Right ventricle myocardium inferior (tissue), 1 donor: ENCODE measurements at regions of chr12 and their contacts with region 1.

Region 1: GRCh38 chr12:19035536-19035935 is 94.0 kb upstream of the PLEKHA5 start:
- DNase-seq: no peak
- ATAC-seq: peak; percentile 74

Region 2: DNA sequence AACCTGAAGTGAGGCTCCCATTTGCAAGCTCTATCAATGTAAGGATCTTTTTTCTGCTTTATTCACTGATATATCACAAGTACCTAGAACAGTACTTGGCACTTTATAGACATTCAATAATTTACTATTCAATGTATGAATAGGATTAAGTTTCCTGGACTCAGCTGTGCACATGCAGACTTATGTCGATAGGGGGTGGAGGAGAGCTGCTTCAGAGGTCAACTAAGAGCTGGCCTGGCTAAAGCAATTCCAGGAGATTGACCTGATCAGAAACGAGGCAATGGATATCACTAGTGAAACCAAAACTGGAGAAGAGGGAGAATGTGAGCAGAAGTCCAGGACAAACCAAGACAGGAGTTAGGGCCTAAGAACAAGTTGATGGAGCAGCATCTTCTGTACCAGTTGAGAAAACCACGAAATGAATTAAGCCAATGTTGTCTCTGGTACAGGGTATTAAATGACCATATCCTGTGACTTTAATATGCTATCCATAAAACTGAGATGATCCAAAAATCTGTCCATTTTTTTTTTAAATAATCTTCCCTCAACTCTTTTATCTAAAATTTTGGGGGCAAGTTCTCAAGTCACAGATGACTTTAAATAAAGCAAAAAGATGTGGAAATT is 605.0 kb before region 1 on chr12:
- intact Hi-C with region 1: loop called (anchors 5 kb)
- DNase-seq: no peak
- ATAC-seq: peak; percentile 83

Region 3: DNA sequence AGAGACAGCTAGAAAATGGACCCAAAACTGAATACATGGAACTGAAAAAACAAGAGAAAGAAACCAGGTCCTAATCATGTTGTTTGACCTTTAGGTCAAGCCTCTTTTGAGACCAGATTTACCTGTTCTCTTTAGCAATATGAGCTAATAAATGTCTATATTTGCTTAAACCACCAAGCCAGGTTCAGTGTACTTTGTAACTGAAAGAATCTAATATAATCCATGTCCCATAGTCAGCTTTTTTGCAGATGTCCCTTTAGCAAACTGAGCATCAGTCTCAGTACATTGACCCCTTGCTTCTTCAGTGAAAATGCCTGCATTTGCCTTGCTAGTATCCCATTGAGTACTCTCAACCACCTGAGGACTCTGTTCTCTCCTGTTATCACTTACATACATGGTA is 359.4 kb before region 1 on chr12:
- intact Hi-C with region 1: no loop called
- DNase-seq: no peak
- ATAC-seq: no peak

Region 4: DNA sequence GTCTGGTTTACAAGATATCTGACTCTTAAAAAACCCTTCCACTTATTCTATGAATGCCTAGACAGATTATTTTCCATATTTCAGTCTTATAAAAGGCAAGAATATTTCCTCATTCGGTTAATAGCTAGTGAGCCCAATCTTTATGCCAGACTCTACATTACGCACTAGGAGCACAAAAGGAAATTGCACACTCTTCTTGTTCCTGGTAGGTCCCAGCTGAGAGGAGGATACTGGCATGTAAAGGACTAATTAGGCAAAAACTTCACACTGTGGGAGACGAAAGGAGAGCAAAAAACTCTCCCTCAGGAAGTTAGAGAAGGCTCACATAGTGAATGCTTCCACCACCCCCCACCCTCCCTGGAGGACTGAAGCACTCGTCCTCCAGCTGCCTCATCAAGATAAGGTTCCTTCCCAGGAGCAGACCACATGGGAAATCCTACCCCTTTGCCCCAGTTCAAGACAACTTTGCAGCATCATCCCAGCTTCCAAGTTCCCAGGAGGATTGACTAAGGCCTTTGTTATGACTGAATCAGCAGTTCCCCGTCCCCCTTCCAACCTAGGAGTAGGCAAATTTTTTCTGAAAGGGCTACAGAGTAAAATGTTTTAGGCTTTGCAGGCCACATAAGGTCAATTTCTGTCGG is 283.1 kb before region 1 on chr12:
- intact Hi-C with region 1: loop called (anchors 2 kb)
- DNase-seq: no peak
- ATAC-seq: peak; percentile 72

Region 5: DNA sequence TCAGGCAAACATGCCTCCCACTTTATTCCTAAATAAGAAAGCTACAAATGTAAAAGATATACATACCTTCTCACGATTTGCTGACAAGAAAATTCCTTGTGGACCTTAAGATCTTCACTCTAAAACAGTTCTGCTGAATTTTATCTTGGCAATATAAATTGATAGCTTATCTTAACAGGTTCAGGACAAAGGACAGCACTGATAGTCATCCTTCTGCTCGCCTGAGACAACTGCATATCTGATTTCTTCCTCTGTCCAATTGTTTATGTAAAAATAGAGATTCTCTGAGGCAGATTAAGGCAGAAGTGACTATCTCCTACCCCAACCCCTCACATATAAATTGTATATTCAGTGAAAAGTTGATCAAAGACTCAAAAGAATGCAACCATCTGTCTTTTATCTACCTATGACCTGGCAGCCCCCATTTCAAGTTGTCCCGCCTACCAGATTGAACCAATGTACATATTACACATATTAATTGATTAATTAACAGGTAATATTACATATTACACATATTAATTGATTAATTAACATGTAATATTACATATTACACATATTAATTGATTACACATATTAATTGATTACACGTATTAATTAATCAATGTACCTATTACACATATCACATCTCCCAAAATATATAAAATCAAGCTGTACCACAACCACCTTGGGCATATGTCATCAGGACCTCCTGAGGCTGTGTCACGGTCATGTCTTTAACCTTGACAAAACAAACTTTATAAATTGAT is 252.5 kb before region 1 on chr12:
- intact Hi-C with region 1: no loop called
- DNase-seq: no peak
- ATAC-seq: no peak

Region 6: DNA sequence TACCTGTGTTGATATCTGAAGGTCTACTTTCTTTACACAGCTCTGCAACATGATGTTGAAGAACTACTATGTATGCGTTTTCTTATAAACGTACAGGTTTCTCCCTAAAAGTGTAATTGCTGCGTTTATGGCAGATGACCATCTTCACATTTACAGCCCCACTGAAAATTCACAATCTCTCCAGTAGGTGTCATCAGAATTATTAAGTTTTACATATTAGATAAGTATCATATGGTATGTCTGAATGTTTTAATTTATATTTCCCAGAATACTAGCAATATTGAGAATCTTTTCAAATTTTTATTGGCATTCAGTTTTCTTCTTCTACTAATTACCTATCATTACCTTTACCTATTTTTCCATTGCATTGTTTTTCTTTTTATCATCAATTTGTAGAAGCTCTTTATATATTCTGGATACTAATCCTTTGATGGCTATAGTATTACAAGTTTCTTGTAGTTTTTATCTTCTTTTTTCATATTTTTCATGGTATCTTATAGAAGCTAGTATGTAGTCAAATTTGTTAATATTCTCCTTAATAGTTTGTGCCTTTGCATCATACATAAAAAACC is 174.2 kb before region 1 on chr12:
- intact Hi-C with region 1: loop called (anchors 5 kb)
- DNase-seq: no peak
- ATAC-seq: no peak